Posterior cingulate gyrus (tissue), 11 donors: ENCODE measurements at regions of chrX and their contacts with region 1.

Region 1: GRCh38 chrX:152632445-152633097 is 5.1 kb upstream of the GABRQ start:
- DNase-seq: peak in 9 of 10 donors; percentile 30 to 91 (median 68)

Region 2: GRCh38 chrX:151753313-151754041 is 879.1 kb before region 1 on chrX:
- intact Hi-C with region 1: loop called (anchors 2 kb)
- DNase-seq: peak; percentile 27 to 92 (median 56)

Region 3: DNA sequence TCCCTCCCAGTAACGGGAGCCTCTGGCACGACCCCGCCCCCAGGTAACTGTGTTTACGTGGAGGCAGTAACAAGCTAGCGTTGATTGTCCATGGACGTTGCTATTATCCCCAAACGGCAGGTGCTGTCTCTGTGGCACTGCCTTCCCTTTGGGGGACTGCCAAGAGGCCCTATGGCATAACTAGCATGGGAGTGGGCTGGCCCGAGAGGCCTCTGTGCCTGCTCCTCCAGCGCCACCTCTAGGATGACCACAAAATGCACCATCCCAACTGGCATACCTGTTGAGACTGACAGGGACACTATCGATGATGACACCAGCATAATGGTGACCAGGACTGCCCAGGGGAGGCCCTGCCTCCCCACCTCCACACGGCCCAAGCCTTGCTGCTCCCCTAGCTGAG is 1149.7 kb after region 1 on chrX:
- intact Hi-C with region 1: no loop called
- DNase-seq: peak in 3 of 10 donors; percentile 29 to 40 (median 38)